K562 (cell line): ENCODE measurements at regions of chr9 and their contacts with region 1.

Region 1: GRCh38 chr9:126804696-126805545 is at the start of gene ZBTB43:
- DNase-seq: peak; percentile 97 to 98 (median 98)
- ATAC-seq: peak; percentile 93
- H3K4me3 ChIP-seq: peak within 1 kb of the TSS; percentile 95
- H3K27ac ChIP-seq: peak within 1 kb of the TSS; percentile 95
- H3K4me1 ChIP-seq: peaks cover 16 to 18% of the 10 kb centered on the region in 2 experiments; a peak in 4 of 5 replicates
- H3K27me3 ChIP-seq: no peaks in the 10 kb centered on the region
- CTCF ChIP-seq: no peak
- EP300 ChIP-seq: no peak
- POLR2A ChIP-seq: peak; percentile 95
- RAD21 ChIP-seq: no peak
- polyA plus RNA-seq, gene ZBTB43: 3.9 to 5.5 TPM

Region 2: GRCh38 chr9:126490871-126491567 is 313.9 kb before region 1 on chr9:
- CTCF ChIA-PET with region 1: no interaction called
- POLR2A ChIA-PET with region 1: no interaction called
- in situ Hi-C with region 1: no loop called
- intact Hi-C with region 1: no loop called
- DNase-seq: peak; percentile 58 to 71 (median 66)
- ATAC-seq: peak; percentile 82
- H3K4me3 ChIP-seq: no peak overlapping the region
- H3K27ac ChIP-seq: no peak overlapping the region
- H3K4me1 ChIP-seq: no peaks in the 10 kb centered on the region
- H3K27me3 ChIP-seq: peaks cover 10 to 56% of the 10 kb centered on the region in 2 experiments
- CTCF ChIP-seq: peak; percentile 68 to 95 (median 82)
- EP300 ChIP-seq: no peak
- POLR2A ChIP-seq: no peak
- RAD21 ChIP-seq: peak; percentile 85

Region 3: DNA sequence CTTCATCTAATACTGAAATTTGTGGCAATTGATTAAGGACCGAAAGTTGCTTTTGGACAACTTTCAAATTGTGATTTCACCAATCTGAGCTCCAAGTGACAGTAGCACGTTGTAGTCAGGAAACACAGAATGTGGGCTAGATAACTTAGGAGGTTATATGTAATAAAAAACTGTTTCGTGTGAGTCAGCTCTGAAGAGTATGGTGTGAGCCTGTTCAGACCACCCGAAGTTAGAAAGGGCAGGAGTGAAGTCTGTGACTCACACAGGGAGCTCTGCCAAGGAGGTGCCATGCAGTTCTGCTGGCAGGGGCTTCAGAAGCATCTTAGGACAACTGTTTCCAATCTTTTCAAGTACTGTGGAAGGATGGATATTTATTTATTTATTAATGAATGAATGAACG is 39.2 kb after region 1 on chr9:
- CTCF ChIA-PET with region 1: no interaction called
- POLR2A ChIA-PET with region 1: interaction called, 3 read pairs
- in situ Hi-C with region 1: no loop called
- intact Hi-C with region 1: loop called (anchors 5 kb)
- DNase-seq: no peak
- ATAC-seq: no peak
- H3K4me3 ChIP-seq: no peak overlapping the region
- H3K27ac ChIP-seq: no peak overlapping the region
- H3K4me1 ChIP-seq: peaks cover 8 to 17% of the 10 kb centered on the region in 2 experiments
- H3K27me3 ChIP-seq: peaks cover 0 to 9% of the 10 kb centered on the region in 2 experiments; a peak in 3 of 5 replicates
- CTCF ChIP-seq: no peak
- EP300 ChIP-seq: no peak
- POLR2A ChIP-seq: no peak
- RAD21 ChIP-seq: no peak